ENCODE measurements at regions of chr5 and their contacts with region 1.

Region 1: DNA sequence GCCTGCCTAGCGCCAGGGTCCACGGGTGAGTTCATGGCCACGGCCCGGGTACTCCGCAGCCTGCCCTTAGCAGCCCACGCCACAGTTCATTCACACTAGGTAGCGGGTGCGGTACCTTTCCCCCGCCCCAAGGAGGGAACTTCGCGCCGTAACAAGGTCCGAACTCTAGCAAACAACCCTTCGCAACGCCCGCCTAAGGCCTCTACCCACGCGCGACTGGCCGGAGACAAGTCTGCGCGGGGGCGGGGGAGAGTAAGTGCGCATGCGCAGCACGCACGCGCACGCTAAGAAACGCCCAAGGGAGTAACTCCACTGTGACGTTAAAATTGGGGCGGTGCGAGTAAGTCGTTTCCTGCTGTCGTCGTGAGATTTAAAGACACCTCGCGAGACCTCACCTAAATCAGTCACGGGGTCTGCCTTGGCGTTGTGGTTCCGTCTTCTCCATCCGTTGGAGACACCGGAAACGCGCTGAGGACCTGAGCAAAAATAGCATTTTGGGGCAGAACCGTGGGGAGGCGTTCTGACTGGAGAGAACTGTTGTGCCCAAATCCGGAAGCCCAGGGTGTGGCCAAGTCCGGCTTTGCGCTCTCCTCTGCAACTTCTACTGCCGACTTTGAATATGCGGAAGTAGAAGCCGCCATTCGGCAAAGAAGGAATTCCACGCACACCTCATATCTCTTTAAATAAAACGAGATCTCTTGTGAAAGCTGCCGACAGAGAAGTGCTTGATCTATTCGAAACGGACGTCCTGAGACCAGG is at the start of gene RAPGEF6:
- DNase-seq: peak; percentile 99
- H3K4me3 Mint-ChIP-seq: peak within 1 kb of the TSS; percentile 98
- H3K27ac Mint-ChIP-seq: peak within 1 kb of the TSS; percentile 87
- H3K4me1 Mint-ChIP-seq: peaks cover 25% of the 10 kb centered on the region
- H3K27me3 Mint-ChIP-seq: peaks cover 3% of the 10 kb centered on the region
- total RNA-seq, gene RAPGEF6: 26.7 to 31.3 TPM

Region 2: GRCh38 chr5:131252824-131253171 is 382.4 kb before region 1 on chr5:
- CTCF ChIA-PET with region 1: no interaction called
- POLR2A ChIA-PET with region 1: no interaction called
- intact Hi-C with region 1: loop called (anchors 5 kb)
- DNase-seq: peak; percentile 90
- H3K4me3 Mint-ChIP-seq: peak overlapping the region; percentile 87
- H3K27ac Mint-ChIP-seq: peak overlapping the region; percentile 96
- H3K4me1 Mint-ChIP-seq: peaks cover 56% of the 10 kb centered on the region
- H3K27me3 Mint-ChIP-seq: no peaks in the 10 kb centered on the region

Region 3: DNA sequence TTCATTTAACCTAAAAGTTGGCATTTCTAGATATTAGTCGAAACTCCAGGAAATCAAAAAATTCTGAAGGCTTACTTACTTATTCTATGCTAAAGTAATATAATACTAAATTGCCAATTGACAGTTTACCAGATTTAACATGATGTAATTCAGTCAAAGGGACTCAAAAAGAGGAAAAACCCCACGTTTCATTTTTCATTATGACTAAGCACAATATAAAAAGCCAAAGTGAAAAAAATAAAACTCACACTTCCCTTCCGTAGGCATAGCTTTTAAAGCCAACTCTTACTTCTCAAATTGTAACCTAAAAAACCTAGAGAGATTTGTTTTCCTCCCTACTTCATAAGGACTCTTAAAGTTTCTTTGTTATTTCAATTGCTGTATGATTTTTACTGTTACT is 146.7 kb before region 1 on chr5:
- CTCF ChIA-PET with region 1: no interaction called
- POLR2A ChIA-PET with region 1: no interaction called
- intact Hi-C with region 1: loop called (anchors 2 kb)
- DNase-seq: no peak
- H3K4me3 Mint-ChIP-seq: peak overlapping the region; percentile 16
- H3K27ac Mint-ChIP-seq: peak overlapping the region; percentile 70
- H3K4me1 Mint-ChIP-seq: peaks cover 30% of the 10 kb centered on the region
- H3K27me3 Mint-ChIP-seq: no peaks in the 10 kb centered on the region

Region 4: DNA sequence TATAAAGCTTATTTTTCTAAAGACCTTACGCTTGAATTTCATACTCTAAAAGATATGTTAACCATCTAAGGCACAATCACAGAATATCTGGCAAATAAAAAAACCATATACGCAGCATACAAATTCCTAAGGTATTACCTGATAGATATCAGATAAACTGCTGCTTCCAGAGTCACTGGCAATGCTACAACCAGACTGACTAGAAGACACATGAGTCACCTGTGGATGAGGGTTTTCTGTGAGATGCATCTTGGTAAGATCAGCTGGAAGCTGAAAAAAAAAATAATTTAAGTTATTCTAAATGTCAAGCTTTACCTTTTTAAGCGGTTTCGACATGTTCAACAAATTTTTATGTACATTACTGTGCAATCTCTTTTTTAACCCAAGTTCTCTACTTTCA is 113.9 kb before region 1 on chr5:
- CTCF ChIA-PET with region 1: no interaction called
- POLR2A ChIA-PET with region 1: no interaction called
- intact Hi-C with region 1: no loop called
- DNase-seq: no peak
- H3K4me3 Mint-ChIP-seq: no peak overlapping the region
- H3K27ac Mint-ChIP-seq: no peak overlapping the region
- H3K4me1 Mint-ChIP-seq: peaks cover 45% of the 10 kb centered on the region
- H3K27me3 Mint-ChIP-seq: no peaks in the 10 kb centered on the region

Region 5: DNA sequence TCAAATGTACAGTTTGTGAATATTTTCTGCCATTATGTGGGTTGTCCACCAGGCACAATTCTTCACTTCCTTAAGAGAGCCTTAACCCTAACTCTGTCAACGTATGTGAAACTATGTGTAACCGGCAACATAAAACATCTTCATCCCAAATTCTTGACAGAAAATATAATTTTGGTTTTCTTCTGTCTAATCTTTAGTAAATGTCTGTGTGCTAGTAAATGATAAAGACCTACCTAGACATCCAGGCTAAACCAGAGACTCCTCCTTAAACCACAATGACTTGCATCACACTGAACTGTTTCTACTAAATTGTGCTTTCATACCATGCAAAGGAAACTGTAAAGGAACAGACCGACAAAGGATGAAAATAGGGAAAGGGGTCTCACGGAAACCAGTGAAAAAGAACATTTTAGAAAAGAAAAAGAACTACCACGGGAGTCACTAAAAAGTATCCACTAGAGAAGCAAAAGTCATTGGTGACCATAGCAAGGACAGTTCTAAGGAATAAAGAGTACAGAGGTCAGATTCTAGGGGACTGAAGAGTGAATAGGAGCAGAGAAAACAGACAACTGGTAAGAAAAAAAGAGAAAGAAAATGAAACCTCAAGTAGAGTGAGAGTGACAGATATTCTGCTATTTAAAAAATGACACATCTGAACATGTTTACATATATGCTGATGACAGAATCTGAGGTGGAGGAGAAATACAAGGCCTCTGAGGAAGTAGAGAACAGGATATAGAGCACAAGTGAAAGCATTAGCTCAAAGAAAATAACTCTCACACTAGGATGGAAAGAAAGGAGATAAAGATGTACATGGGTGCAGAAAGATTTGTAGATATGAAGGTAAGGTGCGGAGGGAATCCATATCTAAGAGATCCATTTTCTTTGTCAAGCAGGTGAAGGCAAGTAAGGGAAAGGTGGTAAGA is 112.3 kb after region 1 on chr5:
- CTCF ChIA-PET with region 1: no interaction called
- POLR2A ChIA-PET with region 1: no interaction called
- intact Hi-C with region 1: loop called (anchors 2 kb)
- DNase-seq: no peak
- H3K4me3 Mint-ChIP-seq: peak overlapping the region; percentile 35
- H3K27ac Mint-ChIP-seq: peak overlapping the region; percentile 78
- H3K4me1 Mint-ChIP-seq: peaks cover 33% of the 10 kb centered on the region
- H3K27me3 Mint-ChIP-seq: no peaks in the 10 kb centered on the region

Region 6: GRCh38 chr5:132103332-132103951 is 468.3 kb after region 1 on chr5:
- CTCF ChIA-PET with region 1: no interaction called
- POLR2A ChIA-PET with region 1: no interaction called
- intact Hi-C with region 1: loop called (anchors 1 kb)
- DNase-seq: peak; percentile 84
- H3K4me3 Mint-ChIP-seq: peak overlapping the region; percentile 38
- H3K27ac Mint-ChIP-seq: peak overlapping the region; percentile 86
- H3K4me1 Mint-ChIP-seq: peaks cover 74% of the 10 kb centered on the region
- H3K27me3 Mint-ChIP-seq: no peaks in the 10 kb centered on the region

Region 7: GRCh38 chr5:132490486-132491367 is 855.6 kb after region 1 on chr5 and contains the start of gene IRF1:
- CTCF ChIA-PET with region 1: no interaction called
- POLR2A ChIA-PET with region 1: no interaction called
- intact Hi-C with region 1: loop called (anchors 10 kb)
- DNase-seq: peak; percentile 99
- H3K4me3 Mint-ChIP-seq: peak within 1 kb of the TSS; percentile 93
- H3K27ac Mint-ChIP-seq: peak within 1 kb of the TSS; percentile 99
- H3K4me1 Mint-ChIP-seq: peaks cover 66% of the 10 kb centered on the region
- H3K27me3 Mint-ChIP-seq: no peaks in the 10 kb centered on the region
- total RNA-seq, gene IRF1: 104 to 106 TPM

Measured in activated CD4-positive, alpha-beta memory T cell treated with anti-CD3 and anti-CD28 coated beads for 36 hours (primary cell).